WTC11 (cell line): ENCODE measurements at regions of chrX and their contacts with region 1.

Region 1: DNA sequence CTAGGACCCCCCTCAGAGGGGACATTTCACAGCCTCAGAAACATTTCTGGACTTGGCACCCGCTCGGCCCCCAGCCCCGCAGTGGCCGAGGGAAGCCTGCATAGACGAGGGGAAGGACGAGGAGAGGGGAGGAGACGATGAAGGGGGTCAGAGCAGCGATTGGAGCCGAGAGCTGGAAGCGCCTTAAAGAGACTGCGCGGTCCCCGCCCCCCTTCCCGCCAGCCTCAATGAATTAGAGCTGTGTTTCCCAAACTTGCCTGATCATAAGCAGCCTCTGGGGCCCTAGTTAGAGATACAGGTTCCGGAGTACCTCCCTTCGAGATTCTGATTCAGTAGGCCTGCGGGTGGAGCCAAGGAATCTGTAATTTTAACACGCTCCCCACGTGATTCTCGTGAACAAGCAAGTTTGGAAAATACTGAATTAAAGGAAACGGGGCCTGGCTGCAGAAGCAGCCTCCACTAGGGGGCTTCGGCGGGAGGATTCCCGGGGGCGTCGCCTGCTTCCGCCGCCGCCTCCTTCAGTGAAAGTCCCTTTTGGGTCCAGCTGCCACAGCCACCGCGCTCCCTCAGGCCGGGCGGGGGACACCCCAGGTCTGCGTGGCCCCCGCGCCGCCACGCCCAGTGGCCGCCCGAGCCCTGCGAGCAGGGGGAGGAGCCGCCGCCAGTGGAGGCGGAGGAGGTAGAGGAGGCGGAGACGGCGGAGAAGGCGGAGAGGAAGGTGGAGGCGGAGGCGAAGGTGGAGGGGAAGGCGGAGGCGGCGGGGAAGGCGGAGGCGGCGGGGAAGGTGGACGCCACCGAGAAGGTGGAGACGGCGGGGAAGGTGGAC is at the start of gene USP27X:
- DNase-seq: peak; percentile 67
- ATAC-seq: peak; percentile 81
- H3K4me3 Mint-ChIP-seq: peak within 1 kb of the TSS; percentile 76
- H3K27ac Mint-ChIP-seq: peak within 1 kb of the TSS; percentile 41; the same call in 1 of the 2 replicates
- H3K4me1 Mint-ChIP-seq: peaks cover 18% of the 10 kb centered on the region
- H3K27me3 Mint-ChIP-seq: peaks cover 15% of the 10 kb centered on the region
- CTCF ChIP-seq: no peak
- total RNA-seq, gene USP27X: 4.4 to 5.1 TPM (median 4.8 TPM) in 3 replicates

Region 2: DNA sequence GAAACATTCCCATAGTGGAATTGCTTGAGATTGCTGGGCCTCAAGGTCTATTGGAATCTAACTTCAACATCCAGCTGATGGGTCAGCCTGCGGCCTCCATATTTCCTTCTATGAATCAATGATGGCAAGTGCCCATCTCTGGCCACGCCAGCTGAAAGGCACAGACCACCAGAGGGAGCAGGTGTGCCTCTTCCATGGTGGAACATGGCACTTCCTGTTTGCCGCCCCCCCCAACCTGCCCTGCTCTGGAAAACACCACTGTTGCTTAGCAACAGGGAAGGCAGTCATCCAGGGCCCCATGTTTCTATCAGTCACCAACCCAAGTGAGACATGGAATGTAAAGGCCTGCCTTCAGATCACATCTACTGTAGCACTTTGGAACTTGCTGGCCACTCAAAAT is 38.4 kb before region 1 on chrX:
- CTCF ChIA-PET with region 1: interaction called, 13 read pairs
- POLR2A ChIA-PET with region 1: no interaction called
- DNase-seq: peak; percentile 79
- ATAC-seq: peak; percentile 86
- H3K4me3 Mint-ChIP-seq: no peak overlapping the region
- H3K27ac Mint-ChIP-seq: no peak overlapping the region
- H3K4me1 Mint-ChIP-seq: no peaks in the 10 kb centered on the region
- H3K27me3 Mint-ChIP-seq: no peaks in the 10 kb centered on the region
- CTCF ChIP-seq: no peak

Region 3: GRCh38 chrX:49922291-49923241 is 43.5 kb after region 1 on chrX and contains the start of gene CLCN5:
- CTCF ChIA-PET with region 1: interaction called, 25 read pairs
- POLR2A ChIA-PET with region 1: interaction called, 3 read pairs
- DNase-seq: peak; percentile 93
- ATAC-seq: peak; percentile 91
- H3K4me3 Mint-ChIP-seq: peak within 1 kb of the TSS; percentile 79
- H3K27ac Mint-ChIP-seq: peak within 1 kb of the TSS; percentile 80
- H3K4me1 Mint-ChIP-seq: peaks cover 25% of the 10 kb centered on the region
- H3K27me3 Mint-ChIP-seq: peaks cover 19% of the 10 kb centered on the region
- CTCF ChIP-seq: no peak
- total RNA-seq, gene CLCN5: 10.7 to 14.2 TPM (median 13.3 TPM) in 3 replicates

Region 4: GRCh38 chrX:49995021-49995731 is 116.1 kb after region 1 on chrX:
- CTCF ChIA-PET with region 1: no interaction called
- POLR2A ChIA-PET with region 1: no interaction called
- DNase-seq: no peak
- ATAC-seq: peak; percentile 43; the same call in 1 of the 2 replicates
- H3K4me3 Mint-ChIP-seq: no peak overlapping the region
- H3K27ac Mint-ChIP-seq: no peak overlapping the region
- H3K4me1 Mint-ChIP-seq: peaks cover 16% of the 10 kb centered on the region
- H3K27me3 Mint-ChIP-seq: no peaks in the 10 kb centered on the region
- CTCF ChIP-seq: no peak